ENCODE measurements at regions of chr1 and their contacts with region 1.

Region 1: GRCh38 chr1:42747125-42747524 is 7.1 kb upstream of the CLDN19 start:
- DNase-seq: peak; percentile 21 to 67 (median 47)
- ATAC-seq: peak; percentile 48
- H3K4me3 ChIP-seq: no peak overlapping the region
- H3K4me3 Mint-ChIP-seq: no peak overlapping the region
- H3K27ac ChIP-seq: no peak overlapping the region
- H3K27ac Mint-ChIP-seq: no peak overlapping the region
- H3K4me1 ChIP-seq: no peaks in the 10 kb centered on the region
- H3K4me1 Mint-ChIP-seq: no peaks in the 10 kb centered on the region
- H3K27me3 ChIP-seq: no peaks in the 10 kb centered on the region
- H3K27me3 Mint-ChIP-seq: no peaks in the 10 kb centered on the region
- CTCF ChIP-seq: peak; percentile 60

Region 2: DNA sequence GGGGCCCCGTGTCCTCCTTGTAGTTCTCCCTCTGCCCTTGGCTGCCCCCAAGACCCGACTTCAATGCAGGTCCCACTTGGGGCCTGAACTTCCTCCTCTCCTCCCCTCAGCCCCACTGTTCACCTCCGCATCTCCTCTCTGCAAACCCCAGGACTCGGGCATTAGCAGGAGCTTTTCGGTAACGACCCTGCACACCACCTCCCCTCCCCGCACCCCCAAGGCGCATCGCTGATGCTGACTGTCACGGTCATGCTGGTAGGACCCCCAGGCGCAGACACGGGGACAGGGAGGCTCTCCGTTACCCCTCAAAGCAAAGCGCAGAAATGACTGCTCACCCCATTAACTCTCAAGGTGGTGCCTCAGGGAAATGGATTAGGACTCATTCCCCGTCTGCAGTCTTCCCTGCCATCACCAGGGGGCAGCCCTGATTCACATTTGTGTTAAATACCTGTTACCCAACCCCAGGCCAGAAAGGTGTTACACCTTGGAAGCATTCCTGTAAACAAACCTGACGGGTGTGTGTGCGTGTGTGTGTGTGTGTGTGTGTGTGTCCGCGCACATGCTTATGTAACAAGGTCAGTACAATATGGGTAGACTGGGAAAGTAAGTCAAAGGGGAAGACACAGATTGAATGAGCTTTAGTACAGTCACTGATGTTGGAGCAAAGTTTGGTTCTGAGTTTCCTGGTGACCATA is 600.4 kb before region 1 on chr1:
- CTCF ChIA-PET with region 1: interaction called, 3 read pairs
- POLR2A ChIA-PET with region 1: no interaction called
- intact Hi-C with region 1: loop called (anchors 2 to 5 kb)
- DNase-seq: peak; percentile 25 to 76 (median 66)
- ATAC-seq: peak; percentile 78
- H3K4me3 ChIP-seq: no peak overlapping the region
- H3K4me3 Mint-ChIP-seq: no peak overlapping the region
- H3K27ac ChIP-seq: no peak overlapping the region
- H3K27ac Mint-ChIP-seq: no peak overlapping the region
- H3K4me1 ChIP-seq: no peaks in the 10 kb centered on the region
- H3K4me1 Mint-ChIP-seq: peaks cover 6% of the 10 kb centered on the region
- H3K27me3 ChIP-seq: peaks cover 0 to 8% of the 10 kb centered on the region in 2 experiments
- H3K27me3 Mint-ChIP-seq: peaks cover 21% of the 10 kb centered on the region
- CTCF ChIP-seq: peak; percentile 73

Region 3: GRCh38 chr1:42311138-42311537 is 436.0 kb before region 1 on chr1:
- CTCF ChIA-PET with region 1: interaction called, 5 read pairs
- POLR2A ChIA-PET with region 1: no interaction called
- intact Hi-C with region 1: loop called in 1 of 2 experiments (anchors 1 kb)
- DNase-seq: no peak
- ATAC-seq: no peak
- H3K4me3 ChIP-seq: no peak overlapping the region
- H3K4me3 Mint-ChIP-seq: no peak overlapping the region
- H3K27ac ChIP-seq: no peak overlapping the region
- H3K27ac Mint-ChIP-seq: no peak overlapping the region
- H3K4me1 ChIP-seq: peaks cover 35% of the 10 kb centered on the region
- H3K4me1 Mint-ChIP-seq: peaks cover 76% of the 10 kb centered on the region
- H3K27me3 ChIP-seq: no peaks in the 10 kb centered on the region
- H3K27me3 Mint-ChIP-seq: no peaks in the 10 kb centered on the region
- CTCF ChIP-seq: no peak

Region 4: GRCh38 chr1:42576935-42577334 is 170.2 kb before region 1 on chr1:
- CTCF ChIA-PET with region 1: interaction called, 56 read pairs
- POLR2A ChIA-PET with region 1: no interaction called
- intact Hi-C with region 1: loop called (anchors 1 kb)
- DNase-seq: no peak
- ATAC-seq: no peak
- H3K4me3 ChIP-seq: no peak overlapping the region
- H3K4me3 Mint-ChIP-seq: no peak overlapping the region
- H3K27ac ChIP-seq: no peak overlapping the region
- H3K27ac Mint-ChIP-seq: no peak overlapping the region
- H3K4me1 ChIP-seq: no peaks in the 10 kb centered on the region
- H3K4me1 Mint-ChIP-seq: no peaks in the 10 kb centered on the region
- H3K27me3 ChIP-seq: no peaks in the 10 kb centered on the region
- H3K27me3 Mint-ChIP-seq: no peaks in the 10 kb centered on the region
- CTCF ChIP-seq: no peak

Region 5: GRCh38 chr1:42586016-42586415 is 161.1 kb before region 1 on chr1:
- CTCF ChIA-PET with region 1: interaction called, 21 read pairs
- POLR2A ChIA-PET with region 1: no interaction called
- intact Hi-C with region 1: no loop called
- DNase-seq: no peak
- ATAC-seq: no peak
- H3K4me3 ChIP-seq: no peak overlapping the region
- H3K4me3 Mint-ChIP-seq: no peak overlapping the region
- H3K27ac ChIP-seq: no peak overlapping the region
- H3K27ac Mint-ChIP-seq: no peak overlapping the region
- H3K4me1 ChIP-seq: no peaks in the 10 kb centered on the region
- H3K4me1 Mint-ChIP-seq: no peaks in the 10 kb centered on the region
- H3K27me3 ChIP-seq: no peaks in the 10 kb centered on the region
- H3K27me3 Mint-ChIP-seq: no peaks in the 10 kb centered on the region
- CTCF ChIP-seq: no peak

Region 6: DNA sequence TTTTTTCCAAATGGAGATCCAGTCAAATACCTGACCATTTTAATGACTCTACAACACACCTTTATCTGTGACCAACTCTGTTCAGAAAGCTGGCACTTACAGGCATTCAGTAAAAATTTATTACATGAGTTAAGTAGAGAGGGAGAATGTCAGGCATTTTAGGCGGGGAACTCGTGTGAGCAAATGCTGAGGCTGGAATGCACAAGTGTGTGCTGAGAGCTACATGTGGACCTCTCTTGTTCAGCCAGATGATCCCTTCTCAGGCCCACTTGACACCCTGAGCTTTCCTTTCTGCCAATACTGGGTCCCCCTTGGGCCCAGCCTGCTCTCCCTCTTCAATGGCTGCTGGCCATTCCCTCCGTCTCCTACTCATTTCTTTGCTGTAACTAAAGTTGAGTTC is 77.2 kb before region 1 on chr1:
- CTCF ChIA-PET with region 1: no interaction called
- POLR2A ChIA-PET with region 1: no interaction called
- intact Hi-C with region 1: no loop called
- DNase-seq: no peak
- ATAC-seq: no peak
- H3K4me3 ChIP-seq: no peak overlapping the region
- H3K4me3 Mint-ChIP-seq: no peak overlapping the region
- H3K27ac ChIP-seq: no peak overlapping the region
- H3K27ac Mint-ChIP-seq: no peak overlapping the region
- H3K4me1 ChIP-seq: no peaks in the 10 kb centered on the region
- H3K4me1 Mint-ChIP-seq: no peaks in the 10 kb centered on the region
- H3K27me3 ChIP-seq: no peaks in the 10 kb centered on the region
- H3K27me3 Mint-ChIP-seq: no peaks in the 10 kb centered on the region
- CTCF ChIP-seq: no peak

Region 7: DNA sequence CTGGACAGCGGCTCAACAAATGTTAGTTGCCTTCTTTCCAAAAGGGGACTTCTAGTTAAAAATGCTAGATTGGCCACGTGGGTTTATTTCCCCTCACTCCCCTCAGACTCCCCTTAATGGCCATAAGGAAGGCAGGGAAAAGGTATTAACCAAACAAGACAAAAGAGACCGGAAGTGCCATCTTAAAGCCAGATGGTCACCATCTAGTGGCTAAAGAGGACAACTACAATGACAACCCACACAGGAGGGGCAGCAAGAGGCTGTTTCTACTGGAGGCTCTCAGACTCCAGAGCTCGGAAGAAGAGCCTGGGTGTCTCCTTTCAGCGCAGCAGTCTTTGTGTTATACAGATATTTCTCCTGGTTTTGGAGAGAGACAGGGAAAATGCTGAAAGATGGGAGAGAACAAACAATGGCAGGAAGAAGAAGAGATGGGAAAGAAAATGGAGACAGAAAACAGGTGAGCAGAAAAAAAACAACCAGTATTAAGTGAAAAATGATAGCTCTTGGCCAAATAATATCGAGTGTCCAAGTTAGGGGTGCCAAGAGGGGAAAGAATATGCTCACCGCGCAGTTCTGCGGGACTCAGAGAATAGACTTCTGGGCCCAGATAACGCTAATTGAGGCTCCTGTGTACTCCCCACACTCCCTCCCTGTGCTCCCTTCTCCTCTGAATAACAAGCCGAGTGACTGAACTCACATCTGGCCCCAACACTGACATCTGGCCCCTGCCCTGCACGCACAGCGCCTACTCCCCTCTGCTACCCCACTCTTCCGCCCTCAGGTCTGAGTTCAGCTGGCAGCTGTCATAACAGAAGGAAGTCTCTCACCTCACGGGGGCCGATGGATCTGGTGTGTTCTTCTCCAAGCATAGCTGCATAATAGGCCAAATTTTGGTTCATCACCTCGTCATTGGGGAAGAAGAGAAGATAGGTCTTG is 10.1 kb after region 1 on chr1:
- CTCF ChIA-PET with region 1: interaction called, 10 read pairs
- POLR2A ChIA-PET with region 1: no interaction called
- intact Hi-C with region 1: no loop called
- DNase-seq: peak in 2 of 9 experiments; percentile 47 to 57
- ATAC-seq: peak; percentile 59
- H3K4me3 ChIP-seq: no peak overlapping the region
- H3K4me3 Mint-ChIP-seq: no peak overlapping the region
- H3K27ac ChIP-seq: no peak overlapping the region
- H3K27ac Mint-ChIP-seq: peak overlapping the region; percentile 37
- H3K4me1 ChIP-seq: no peaks in the 10 kb centered on the region
- H3K4me1 Mint-ChIP-seq: no peaks in the 10 kb centered on the region
- H3K27me3 ChIP-seq: no peaks in the 10 kb centered on the region
- H3K27me3 Mint-ChIP-seq: no peaks in the 10 kb centered on the region
- CTCF ChIP-seq: peak; percentile 52

Measured in CD8-positive, alpha-beta T cell (primary cell).